ENCODE measurements at regions of chr15 and their contacts with region 1.

Region 1: GRCh38 chr15:99213187-99213811 is 36.1 kb downstream of the TTC23 start:
- DNase-seq: peak; percentile 49 to 81 (median 72)
- ATAC-seq: peak; percentile 82 to 95 (median 94)
- H3K4me3 ChIP-seq: no peak overlapping the region
- H3K27ac ChIP-seq: no peak overlapping the region
- H3K4me1 ChIP-seq: no peaks in the 10 kb centered on the region
- H3K27me3 ChIP-seq: no peaks in the 10 kb centered on the region
- CTCF ChIP-seq: peak; percentile 50 to 77 (median 73)

Region 2: GRCh38 chr15:99096894-99097426 is 116.3 kb before region 1 on chr15:
- intact Hi-C with region 1: loop called in 2 of 3 experiments (anchors 5 kb)
- DNase-seq: no peak
- ATAC-seq: no peak
- H3K4me3 ChIP-seq: no peak overlapping the region
- H3K27ac ChIP-seq: no peak overlapping the region
- H3K4me1 ChIP-seq: no peaks in the 10 kb centered on the region
- H3K27me3 ChIP-seq: no peaks in the 10 kb centered on the region
- CTCF ChIP-seq: no peak

Region 3: GRCh38 chr15:99104788-99105513 is 108.3 kb before region 1 on chr15 and contains the start of gene SYNM:
- intact Hi-C with region 1: loop called in 1 of 3 experiments (anchors 5 kb)
- DNase-seq: peak; percentile 45 to 88 (median 74)
- ATAC-seq: peak; percentile 80 to 89 (median 86)
- H3K4me3 ChIP-seq: peak within 1 kb of the TSS; percentile 31 to 58 (median 36)
- H3K27ac ChIP-seq: peak within 1 kb of the TSS in 2 of 4 donors; percentile 28 to 33
- H3K4me1 ChIP-seq: no peaks in the 10 kb centered on the region
- H3K27me3 ChIP-seq: no peaks in the 10 kb centered on the region
- CTCF ChIP-seq: peak; percentile 51 to 82 (median 66)
- total RNA-seq, gene SYNM: 2.0 to 4.5 (median 3.3) TPM

Region 4: DNA sequence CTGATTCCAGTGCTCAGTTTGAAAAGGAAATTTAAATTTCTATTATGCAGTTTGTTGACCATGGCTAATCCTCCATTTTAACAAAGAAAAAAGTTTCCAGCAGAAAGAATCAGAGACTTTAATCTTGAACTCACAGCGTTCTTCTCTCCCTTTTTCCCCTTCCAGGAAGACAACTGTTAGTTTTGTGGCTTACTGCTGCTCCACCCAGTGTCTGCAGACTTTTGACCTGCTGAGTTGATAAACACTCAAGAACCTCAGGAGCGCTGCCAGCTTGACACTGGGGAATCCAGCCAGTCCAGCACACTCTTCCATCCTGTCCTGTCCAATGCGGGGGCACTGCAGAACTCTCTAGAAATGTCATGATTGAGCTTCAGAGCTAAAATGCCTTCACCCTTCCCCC is 172.6 kb after region 1 on chr15:
- intact Hi-C with region 1: no loop called
- DNase-seq: peak in 1 of 6 donors; percentile 40
- ATAC-seq: peak in 3 of 4 donors; percentile 56 to 86 (median 67)
- H3K4me3 ChIP-seq: no peak overlapping the region
- H3K27ac ChIP-seq: no peak overlapping the region
- H3K4me1 ChIP-seq: no peaks in the 10 kb centered on the region
- H3K27me3 ChIP-seq: no peaks in the 10 kb centered on the region
- CTCF ChIP-seq: no peak

Measured in pancreas (tissue), 10 donors.